A673 (cell line): ENCODE measurements at regions of chr1 and their contacts with region 1.

Region 1: GRCh38 chr1:237041795-237042525 is at the start of gene RYR2:
- DNase-seq: peak; percentile 64
- H3K4me3 ChIP-seq: peak within 1 kb of the TSS; percentile 51
- H3K27ac ChIP-seq: no peak within 1 kb of the TSS
- H3K4me1 ChIP-seq: no peaks in the 10 kb centered on the region
- H3K27me3 ChIP-seq: peaks cover 4% of the 10 kb centered on the region
- CTCF ChIP-seq: peak; percentile 51
- total RNA-seq, gene RYR2: 2.0 and 2.8 TPM in 2 replicates

Region 2: GRCh38 chr1:237556911-237557310 is 515.0 kb after region 1 on chr1:
- CTCF ChIA-PET with region 1: no interaction called
- POLR2A ChIA-PET with region 1: no interaction called
- intact Hi-C with region 1: loop called (anchors 10 kb)
- DNase-seq: no peak
- H3K4me3 ChIP-seq: no peak overlapping the region
- H3K27ac ChIP-seq: no peak overlapping the region
- H3K4me1 ChIP-seq: no peaks in the 10 kb centered on the region
- H3K27me3 ChIP-seq: no peaks in the 10 kb centered on the region
- CTCF ChIP-seq: no peak